Ovary (tissue), 10 donors: ENCODE measurements at regions of chr11 and their contacts with region 1.

Region 1: DNA sequence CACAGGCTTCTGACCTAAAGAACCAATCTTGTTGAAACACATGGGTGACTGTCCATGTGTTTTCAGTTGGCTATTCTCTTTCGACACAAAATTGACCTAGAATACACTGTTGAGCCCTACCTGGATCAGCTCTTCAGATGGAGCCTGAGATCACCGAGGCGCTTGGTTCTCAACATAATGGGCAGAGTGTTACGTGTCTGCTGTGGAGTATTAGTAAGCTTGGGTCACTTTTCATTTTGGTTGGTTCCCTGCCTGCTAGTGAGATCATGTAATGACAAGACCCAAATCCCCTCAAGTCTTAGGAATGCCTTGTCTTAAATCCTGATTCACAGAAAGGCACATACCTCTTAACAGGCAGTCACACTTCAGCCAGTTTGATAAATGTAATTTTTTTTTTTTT is 8.7 kb downstream of the MED19 start:
- DNase-seq: no peak
- H3K4me3 ChIP-seq: no peak overlapping the region
- H3K27ac ChIP-seq: no peak overlapping the region
- H3K4me1 ChIP-seq: peaks cover 3% of the 10 kb centered on the region
- H3K27me3 ChIP-seq: no peaks in the 10 kb centered on the region
- CTCF ChIP-seq: no peak
- EP300 ChIP-seq: no peak
- POLR2A ChIP-seq: no peak

Region 2: GRCh38 chr11:57680552-57680874 is 22.8 kb before region 1 on chr11:
- intact Hi-C with region 1: loop called in 1 of 4 experiments (anchors 2 kb)
- DNase-seq: no peak
- H3K4me3 ChIP-seq: no peak overlapping the region
- H3K27ac ChIP-seq: no peak overlapping the region
- H3K4me1 ChIP-seq: peaks cover 11% of the 10 kb centered on the region
- H3K27me3 ChIP-seq: no peaks in the 10 kb centered on the region
- CTCF ChIP-seq: no peak
- EP300 ChIP-seq: no peak
- POLR2A ChIP-seq: no peak